ENCODE measurements at regions of chr11 and their contacts with region 1.

Region 1: DNA sequence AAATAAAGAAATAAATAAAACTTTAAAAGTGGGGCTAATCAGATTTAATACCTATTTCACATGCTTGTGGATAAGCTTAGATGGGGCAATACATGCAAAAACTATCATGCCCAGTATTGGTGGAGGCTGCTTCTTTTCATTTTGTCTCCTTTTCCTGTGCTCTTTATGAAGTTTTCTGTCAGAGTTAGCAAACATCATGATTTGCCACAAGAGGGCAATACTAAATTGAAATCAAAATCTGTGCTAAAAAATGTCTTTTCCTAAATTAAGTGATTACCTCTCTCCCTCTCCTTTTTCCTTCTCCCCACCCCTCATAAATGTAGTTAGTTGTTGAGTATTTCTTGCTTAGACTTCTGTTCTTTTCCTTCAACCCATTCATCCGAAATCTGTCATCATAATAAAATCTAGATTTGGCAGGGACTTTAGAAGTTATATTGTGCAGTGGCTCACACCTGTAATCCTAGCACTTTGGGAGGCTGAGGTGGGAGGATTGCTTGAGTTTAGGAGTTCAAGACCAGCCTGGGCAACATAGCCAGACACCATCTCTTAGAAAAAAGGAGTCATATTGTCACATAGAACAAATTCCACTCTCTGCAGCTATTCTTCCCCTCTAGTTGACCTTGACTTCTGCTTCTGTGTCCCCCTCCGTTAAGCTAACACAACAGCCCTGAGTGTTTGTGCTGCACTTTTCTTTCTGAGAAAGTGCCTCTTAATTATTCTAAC is 4.7 kb upstream of the ARHGAP42 start:
- DNase-seq: no peak
- H3K4me3 ChIP-seq: no peak overlapping the region
- H3K27ac ChIP-seq: peak overlapping the region in 1 of 4 donors; percentile 13
- H3K4me1 ChIP-seq: peaks cover 0 to 27% (median 9%) of the 10 kb centered on the region in 4 donors
- H3K27me3 ChIP-seq: no peaks in the 10 kb centered on the region
- CTCF ChIP-seq: peak in 3 of 4 experiments; percentile 21 to 40 (median 28)
- EP300 ChIP-seq: no peak
- POLR2A ChIP-seq: no peak

Region 2: GRCh38 chr11:100629671-100630070 is 52.7 kb before region 1 on chr11:
- intact Hi-C with region 1: no loop called
- DNase-seq: no peak
- H3K4me3 ChIP-seq: no peak overlapping the region
- H3K27ac ChIP-seq: no peak overlapping the region
- H3K4me1 ChIP-seq: peaks cover 0 to 20% (median 7%) of the 10 kb centered on the region in 4 donors
- H3K27me3 ChIP-seq: no peaks in the 10 kb centered on the region
- CTCF ChIP-seq: no peak
- EP300 ChIP-seq: no peak
- POLR2A ChIP-seq: no peak

Region 3: GRCh38 chr11:100753172-100753543 is 70.8 kb after region 1 on chr11:
- intact Hi-C with region 1: no loop called
- DNase-seq: no peak
- H3K4me3 ChIP-seq: no peak overlapping the region
- H3K27ac ChIP-seq: no peak overlapping the region
- H3K4me1 ChIP-seq: no peaks in the 10 kb centered on the region
- H3K27me3 ChIP-seq: no peaks in the 10 kb centered on the region
- CTCF ChIP-seq: no peak
- EP300 ChIP-seq: no peak
- POLR2A ChIP-seq: no peak

Region 4: DNA sequence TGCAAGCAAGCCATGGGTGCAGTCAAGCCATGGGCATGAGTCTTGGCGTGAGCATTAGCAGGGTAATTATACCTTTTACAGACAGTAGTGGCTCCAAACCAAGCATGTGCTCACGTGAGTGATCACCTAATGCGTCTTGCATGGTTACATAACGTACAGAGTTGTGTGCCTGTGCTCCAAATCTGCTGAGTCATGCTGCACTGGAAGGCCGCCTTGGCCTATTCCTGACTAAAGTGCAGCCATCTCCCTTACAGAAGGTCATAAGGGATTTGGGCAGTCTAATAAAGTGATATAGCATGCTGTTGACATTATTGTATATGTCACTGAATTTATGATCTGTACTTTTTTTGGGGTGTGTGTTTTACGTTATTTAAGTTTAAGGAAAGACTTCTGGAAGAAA is 107.1 kb after region 1 on chr11:
- intact Hi-C with region 1: no loop called
- DNase-seq: peak; percentile 65
- H3K4me3 ChIP-seq: no peak overlapping the region
- H3K27ac ChIP-seq: no peak overlapping the region
- H3K4me1 ChIP-seq: peaks cover 0 to 28% (median 8%) of the 10 kb centered on the region in 4 donors
- H3K27me3 ChIP-seq: no peaks in the 10 kb centered on the region
- CTCF ChIP-seq: no peak
- EP300 ChIP-seq: no peak
- POLR2A ChIP-seq: no peak

Region 5: GRCh38 chr11:100830978-100831732 is 148.7 kb after region 1 on chr11:
- intact Hi-C with region 1: no loop called
- DNase-seq: no peak
- H3K4me3 ChIP-seq: no peak overlapping the region
- H3K27ac ChIP-seq: peak overlapping the region in 2 of 4 donors; percentile 34 to 48
- H3K4me1 ChIP-seq: peaks cover 0 to 32% (median 18%) of the 10 kb centered on the region in 4 donors
- H3K27me3 ChIP-seq: no peaks in the 10 kb centered on the region
- CTCF ChIP-seq: no peak
- EP300 ChIP-seq: no peak
- POLR2A ChIP-seq: no peak

Region 6: GRCh38 chr11:100855466-100856067 is 173.2 kb after region 1 on chr11:
- intact Hi-C with region 1: loop called (anchors 1 kb)
- DNase-seq: no peak
- H3K4me3 ChIP-seq: no peak overlapping the region
- H3K27ac ChIP-seq: no peak overlapping the region
- H3K4me1 ChIP-seq: no peaks in the 10 kb centered on the region
- H3K27me3 ChIP-seq: no peaks in the 10 kb centered on the region
- CTCF ChIP-seq: peak in 3 of 4 experiments; percentile 37 to 46 (median 46)
- EP300 ChIP-seq: no peak
- POLR2A ChIP-seq: no peak